Caco-2 (cell line): ENCODE measurements at regions of chr11 and their contacts with region 1.

Region 1: GRCh38 chr11:21933095-21933494 is 259.8 kb upstream of the ANO5 start:
- DNase-seq: no peak
- H3K4me3 ChIP-seq: no peak overlapping the region
- H3K4me3 Mint-ChIP-seq: no peak overlapping the region
- H3K27ac Mint-ChIP-seq: no peak overlapping the region
- H3K4me1 ChIP-seq: no peaks in the 10 kb centered on the region
- H3K4me1 Mint-ChIP-seq: no peaks in the 10 kb centered on the region
- H3K27me3 ChIP-seq: no peaks in the 10 kb centered on the region
- H3K27me3 Mint-ChIP-seq: peaks cover 5% of the 10 kb centered on the region
- CTCF ChIP-seq: peak; percentile 47 to 48

Region 2: GRCh38 chr11:22130462-22131053 is 197.5 kb after region 1 on chr11:
- CTCF ChIA-PET with region 1: no interaction called
- POLR2A ChIA-PET with region 1: no interaction called
- intact Hi-C with region 1: loop called (anchors 1 kb)
- DNase-seq: no peak
- H3K4me3 ChIP-seq: no peak overlapping the region
- H3K4me3 Mint-ChIP-seq: no peak overlapping the region
- H3K27ac Mint-ChIP-seq: no peak overlapping the region
- H3K4me1 ChIP-seq: no peaks in the 10 kb centered on the region
- H3K4me1 Mint-ChIP-seq: no peaks in the 10 kb centered on the region
- H3K27me3 ChIP-seq: no peaks in the 10 kb centered on the region
- H3K27me3 Mint-ChIP-seq: no peaks in the 10 kb centered on the region
- CTCF ChIP-seq: peak; percentile 43 to 45

Region 3: GRCh38 chr11:22151649-22152197 is 218.6 kb after region 1 on chr11:
- CTCF ChIA-PET with region 1: no interaction called
- POLR2A ChIA-PET with region 1: no interaction called
- intact Hi-C with region 1: loop called (anchors 1 kb)
- DNase-seq: no peak
- H3K4me3 ChIP-seq: no peak overlapping the region
- H3K4me3 Mint-ChIP-seq: no peak overlapping the region
- H3K27ac Mint-ChIP-seq: no peak overlapping the region
- H3K4me1 ChIP-seq: no peaks in the 10 kb centered on the region
- H3K4me1 Mint-ChIP-seq: no peaks in the 10 kb centered on the region
- H3K27me3 ChIP-seq: no peaks in the 10 kb centered on the region; the same call in 1 of the 2 replicates
- H3K27me3 Mint-ChIP-seq: peaks cover 3% of the 10 kb centered on the region
- CTCF ChIP-seq: no peak